Left cardiac atrium (tissue), 4 donors: ENCODE measurements at regions of chr13 and their contacts with region 1.

Region 1: GRCh38 chr13:30465585-30466357 is at the start of gene HMGB1:
- DNase-seq: peak; percentile 98
- ATAC-seq: peak; percentile 94 to 98
- total RNA-seq, gene HMGB1: 168 to 184 TPM

Region 2: GRCh38 chr13:30257468-30258099 is 208.2 kb before region 1 on chr13:
- intact Hi-C with region 1: loop called in 1 of 2 experiments (anchors 5 kb)
- DNase-seq: no peak
- ATAC-seq: peak; percentile 57 to 66

Region 3: GRCh38 chr13:30408319-30409101 is 57.3 kb before region 1 on chr13:
- intact Hi-C with region 1: loop called in 1 of 2 experiments (anchors 5 kb)
- DNase-seq: peak; percentile 95
- ATAC-seq: peak; percentile 93 to 96

Region 4: DNA sequence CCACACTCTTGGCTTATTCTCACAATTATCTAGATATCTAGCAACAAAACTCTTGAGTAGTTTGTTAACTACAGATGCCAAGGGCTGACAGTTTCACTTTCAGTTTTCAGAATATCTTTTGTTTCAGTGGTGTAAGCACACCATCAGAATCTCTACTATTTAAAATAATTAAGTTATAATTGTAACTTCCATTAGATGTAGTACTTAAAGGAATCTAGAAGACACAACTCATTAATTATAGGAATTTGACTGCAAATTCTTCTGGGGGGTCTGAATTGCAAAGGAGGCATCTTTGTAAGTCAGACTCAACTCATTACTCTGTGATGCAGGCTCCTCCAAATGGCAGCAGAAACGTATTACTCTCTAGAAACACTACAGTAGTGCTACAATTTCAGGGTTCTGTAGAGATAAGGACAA is 107.1 kb after region 1 on chr13:
- intact Hi-C with region 1: loop called in 1 of 2 experiments (anchors 10 kb)
- DNase-seq: no peak
- ATAC-seq: peak; percentile 46 to 63

Region 5: GRCh38 chr13:30617315-30618185 is 151.8 kb after region 1 on chr13 and contains the start of gene USPL1:
- intact Hi-C with region 1: loop called in 1 of 2 experiments (anchors 2 kb)
- DNase-seq: peak; percentile 98
- ATAC-seq: peak; percentile 95 to 97
- total RNA-seq, gene USPL1: 8.5 to 12.7 TPM